ENCODE measurements at regions of chr14 and their contacts with region 1.

Region 1: DNA sequence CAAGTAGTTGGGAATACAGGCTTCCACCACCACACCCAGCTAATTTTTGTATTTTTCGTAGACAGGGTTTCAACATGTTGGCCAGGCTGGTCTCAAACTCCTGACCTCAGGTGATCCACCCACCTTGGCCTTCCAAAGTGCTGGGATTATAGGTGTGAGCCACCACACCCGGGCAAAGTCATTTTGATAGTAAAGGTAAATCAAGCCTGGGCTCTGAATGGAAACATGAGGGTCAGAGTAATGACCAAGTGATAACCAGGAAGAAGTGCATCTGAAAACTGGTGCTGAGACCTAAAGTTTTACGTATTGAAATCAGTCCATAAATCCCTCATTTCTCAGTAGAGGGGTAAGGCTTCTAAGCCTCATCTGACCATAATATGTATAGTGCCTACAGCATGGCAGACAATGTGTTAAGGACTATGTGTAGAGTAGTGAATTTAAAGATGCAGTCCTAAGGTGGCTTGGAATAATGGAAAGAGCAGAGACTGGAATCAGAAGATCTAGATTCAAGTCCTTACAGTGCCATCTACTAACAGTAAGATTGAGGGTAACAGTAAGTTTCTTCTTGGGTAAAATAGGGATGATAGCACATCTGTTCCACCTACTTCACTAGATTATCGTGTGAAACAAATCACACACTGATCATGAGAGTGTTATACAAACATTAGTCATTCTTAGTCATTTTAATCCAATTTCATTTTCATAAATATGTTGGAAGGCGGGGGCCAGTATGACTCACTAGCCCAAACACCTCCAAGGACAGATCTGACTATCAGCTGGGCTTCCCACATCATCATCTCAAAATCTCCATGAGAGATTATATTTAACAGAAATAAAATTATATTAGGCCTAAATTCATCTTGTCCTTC is 11.2 kb downstream of the MAP4K5 start:
- DNase-seq: no peak
- H3K4me3 Mint-ChIP-seq: no peak overlapping the region
- H3K27ac Mint-ChIP-seq: peak overlapping the region; percentile 91
- H3K4me1 Mint-ChIP-seq: peaks cover 43% of the 10 kb centered on the region
- H3K27me3 Mint-ChIP-seq: no peaks in the 10 kb centered on the region

Region 2: GRCh38 chr14:49862089-49862673 is 659.0 kb before region 1 on chr14:
- intact Hi-C with region 1: loop called (anchors 2 kb)
- DNase-seq: peak; percentile 83
- H3K4me3 Mint-ChIP-seq: no peak overlapping the region
- H3K27ac Mint-ChIP-seq: no peak overlapping the region
- H3K4me1 Mint-ChIP-seq: peaks cover 16% of the 10 kb centered on the region
- H3K27me3 Mint-ChIP-seq: no peaks in the 10 kb centered on the region

Region 3: DNA sequence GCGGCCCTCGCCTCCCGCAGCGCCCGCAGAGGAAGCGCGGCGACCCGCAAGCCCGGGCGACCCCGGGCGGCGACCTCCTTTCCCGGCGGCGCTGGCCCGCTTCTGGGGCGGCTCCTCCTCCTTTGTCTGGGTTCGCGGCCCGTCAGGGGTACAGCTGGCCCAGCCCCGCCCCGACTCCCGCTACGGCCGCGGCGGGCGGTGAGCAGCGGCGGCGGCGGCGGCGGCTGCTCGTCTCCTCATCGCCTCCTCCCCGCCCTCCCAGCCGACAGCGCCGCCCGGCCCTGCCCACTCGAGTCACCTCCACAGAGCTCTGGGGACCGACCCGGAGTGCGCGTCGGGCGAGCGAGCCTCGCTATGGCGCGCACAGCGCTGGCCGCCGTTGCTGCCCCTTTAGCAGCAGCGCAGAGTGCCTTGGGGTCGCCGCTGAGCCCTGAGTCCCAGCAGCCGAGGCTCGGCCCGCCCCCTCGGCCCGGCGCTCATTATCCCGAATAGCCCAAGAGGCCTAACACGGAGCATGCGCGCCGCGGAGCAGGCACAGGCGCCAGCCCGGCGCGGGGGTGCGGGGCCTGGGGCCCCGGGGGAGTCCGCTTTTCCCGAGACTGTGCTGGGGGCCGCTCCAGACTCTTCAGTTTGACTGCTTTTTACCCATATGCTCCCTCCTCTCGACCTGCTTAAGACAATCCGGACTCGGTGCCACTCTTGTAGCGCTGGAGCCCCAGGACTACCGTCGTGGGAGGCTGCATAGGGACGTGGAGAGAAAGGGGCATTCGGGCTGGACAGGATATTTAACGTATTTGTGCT is 289.5 kb before region 1 on chr14 and contains the start of gene SOS2:
- intact Hi-C with region 1: loop called (anchors 5 kb)
- DNase-seq: peak; percentile 80
- H3K4me3 Mint-ChIP-seq: peak within 1 kb of the TSS; percentile 92
- H3K27ac Mint-ChIP-seq: peak within 1 kb of the TSS; percentile 88
- H3K4me1 Mint-ChIP-seq: peaks cover 36% of the 10 kb centered on the region
- H3K27me3 Mint-ChIP-seq: peaks cover 4% of the 10 kb centered on the region
- total RNA-seq, gene SOS2: 17.0 and 20.7 TPM in 2 replicates

Region 4: DNA sequence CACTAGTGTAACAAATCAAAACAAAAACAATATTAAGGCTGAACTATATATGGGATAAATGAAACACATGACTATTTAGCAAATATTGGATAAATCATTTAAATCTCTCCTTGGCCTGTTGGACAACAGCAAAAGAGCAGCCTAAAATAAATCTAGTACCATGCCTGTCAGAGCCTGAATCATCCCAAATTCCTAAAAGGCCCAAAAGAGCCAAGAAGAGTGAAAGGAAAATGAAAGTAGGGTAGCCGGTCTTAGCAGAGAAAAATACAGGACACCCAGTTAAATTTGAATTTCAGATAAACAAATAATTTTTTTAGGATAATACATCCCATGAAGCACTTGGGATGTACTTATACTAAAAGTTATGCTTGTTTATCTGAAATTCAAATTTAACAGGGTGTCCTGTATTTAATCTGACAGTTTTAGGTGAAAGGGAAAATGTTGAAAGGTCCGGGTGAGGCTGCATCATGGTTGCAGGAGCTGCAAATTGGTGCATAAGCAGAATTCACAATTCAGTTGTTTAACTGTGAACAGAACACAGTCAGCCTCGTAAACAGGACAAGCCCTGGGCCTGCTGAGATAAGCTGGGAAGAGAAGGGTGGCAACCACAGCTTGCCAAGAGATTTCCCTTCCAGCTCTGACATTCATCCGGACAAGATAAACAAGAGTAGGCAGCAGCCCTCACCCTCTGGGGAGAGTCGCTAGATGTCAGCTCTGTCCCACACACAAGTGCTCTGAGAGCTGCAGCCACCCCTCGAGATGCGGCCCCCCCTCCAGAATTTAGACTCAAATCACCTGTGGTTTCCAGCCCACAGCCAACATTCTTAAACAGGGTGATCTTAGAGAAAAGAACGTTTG is 178.7 kb before region 1 on chr14:
- intact Hi-C with region 1: loop called (anchors 1 kb)
- DNase-seq: peak; percentile 33
- H3K4me3 Mint-ChIP-seq: no peak overlapping the region
- H3K27ac Mint-ChIP-seq: peak overlapping the region; percentile 44
- H3K4me1 Mint-ChIP-seq: peaks cover 27% of the 10 kb centered on the region
- H3K27me3 Mint-ChIP-seq: peaks cover 11% of the 10 kb centered on the region

Region 5: GRCh38 chr14:50462111-50462510 is 59.1 kb before region 1 on chr14:
- intact Hi-C with region 1: no loop called
- DNase-seq: no peak
- H3K4me3 Mint-ChIP-seq: no peak overlapping the region
- H3K27ac Mint-ChIP-seq: no peak overlapping the region
- H3K4me1 Mint-ChIP-seq: peaks cover 6% of the 10 kb centered on the region
- H3K27me3 Mint-ChIP-seq: no peaks in the 10 kb centered on the region

Region 6: DNA sequence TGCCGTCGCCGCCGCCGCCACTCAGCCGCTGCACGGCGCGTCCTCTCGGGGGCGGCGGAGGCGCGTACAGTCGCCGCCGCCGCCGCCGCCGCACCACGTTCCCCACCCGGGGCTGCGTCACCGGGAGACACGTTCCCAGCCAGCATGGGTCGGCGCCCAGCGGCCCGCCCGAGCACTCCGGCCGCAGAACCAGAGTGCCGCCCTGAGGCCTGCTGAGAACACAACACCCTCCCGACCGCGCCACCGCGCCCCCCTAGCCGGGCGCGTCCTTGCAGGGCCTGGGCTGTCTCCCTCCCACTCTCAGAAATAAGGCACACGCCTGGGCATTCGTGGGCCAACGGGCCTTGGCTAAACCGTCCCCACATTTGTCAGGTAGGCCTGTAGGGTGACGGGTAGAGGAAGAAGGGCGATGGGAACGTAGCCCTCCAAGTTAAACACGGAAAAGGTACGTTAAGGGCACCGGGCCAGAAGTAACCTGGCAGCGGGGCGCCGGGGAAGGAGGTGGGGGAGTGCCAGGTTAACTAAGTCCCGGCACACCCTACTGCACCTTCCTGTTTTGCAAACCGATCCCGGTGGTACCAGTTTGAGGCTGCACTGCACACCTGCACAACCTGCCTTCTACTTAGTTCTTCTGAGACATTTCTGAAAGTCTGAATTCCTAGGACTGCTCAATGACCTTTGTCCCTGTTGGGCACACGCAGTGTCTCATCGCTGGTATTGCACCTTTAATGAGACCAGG is 11.5 kb after region 1 on chr14 and contains the start of gene MAP4K5:
- intact Hi-C with region 1: loop called (anchors 1 kb)
- DNase-seq: peak; percentile 82
- H3K4me3 Mint-ChIP-seq: peak within 1 kb of the TSS; percentile 88
- H3K27ac Mint-ChIP-seq: peak within 1 kb of the TSS; percentile 51
- H3K4me1 Mint-ChIP-seq: peaks cover 30% of the 10 kb centered on the region
- H3K27me3 Mint-ChIP-seq: peaks cover 34% of the 10 kb centered on the region
- total RNA-seq, gene MAP4K5: 21.0 and 23.1 TPM in 2 replicates

Region 7: GRCh38 chr14:50559990-50560930 is 39.1 kb after region 1 on chr14 and contains the start of gene ATL1:
- intact Hi-C with region 1: no loop called
- DNase-seq: peak; percentile 32
- H3K4me3 Mint-ChIP-seq: peak within 1 kb of the TSS; percentile 69
- H3K27ac Mint-ChIP-seq: no peak within 1 kb of the TSS
- H3K4me1 Mint-ChIP-seq: peaks cover 14% of the 10 kb centered on the region
- H3K27me3 Mint-ChIP-seq: peaks cover 63% of the 10 kb centered on the region
- total RNA-seq, gene ATL1: 1.3 and 2.1 TPM in 2 replicates

Measured in activated T-helper 2 cell treated with anti-CD3 and anti-CD28 coated beads, Interferon-gamma antibody, Interleukin-2, Interleukin-4, amounts not matched to agents 10 μg/mL and 5 μg/mL and 100 μg/mL, durations not matched to agents 14 hours and 24 hours and 36 hours (primary cell).